Right ventricle myocardium inferior (tissue), 1 donor: ENCODE measurements at regions of chr3 and their contacts with region 1.

Region 1: DNA sequence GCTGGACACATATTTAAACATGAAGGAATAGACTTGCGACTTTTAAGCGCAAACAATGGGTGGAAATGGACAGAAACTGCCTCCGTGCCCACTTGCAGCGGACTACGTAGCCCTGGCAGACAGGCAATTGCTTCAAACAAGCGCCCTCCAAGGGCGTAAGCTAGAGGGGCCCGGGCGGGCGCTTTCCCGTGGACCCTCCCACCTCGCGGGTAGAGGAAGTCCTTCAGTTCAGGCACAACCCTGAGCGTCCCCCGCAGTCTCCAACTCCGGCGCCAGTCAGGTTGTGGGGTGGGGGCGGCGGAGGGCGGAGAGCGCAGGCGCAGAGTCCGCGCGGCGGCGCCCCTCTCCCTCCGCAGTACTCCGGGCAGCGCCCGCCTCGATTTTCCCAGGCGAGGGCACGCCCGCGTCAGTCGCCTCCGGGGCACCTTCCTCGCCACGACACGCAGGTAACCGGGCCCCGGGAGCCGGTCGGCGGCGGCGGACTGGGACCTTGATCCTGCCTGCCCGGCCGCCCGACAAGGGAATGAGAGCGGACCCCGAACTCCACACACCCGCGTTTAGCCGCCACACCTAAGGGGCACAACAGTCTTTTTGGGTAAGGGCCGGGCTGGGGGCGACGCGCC is at the start of gene SLC35G2:
- DNase-seq: peak; percentile 70
- ATAC-seq: peak; percentile 69
- total RNA-seq, gene SLC35G2: 2.1 TPM

Region 2: DNA sequence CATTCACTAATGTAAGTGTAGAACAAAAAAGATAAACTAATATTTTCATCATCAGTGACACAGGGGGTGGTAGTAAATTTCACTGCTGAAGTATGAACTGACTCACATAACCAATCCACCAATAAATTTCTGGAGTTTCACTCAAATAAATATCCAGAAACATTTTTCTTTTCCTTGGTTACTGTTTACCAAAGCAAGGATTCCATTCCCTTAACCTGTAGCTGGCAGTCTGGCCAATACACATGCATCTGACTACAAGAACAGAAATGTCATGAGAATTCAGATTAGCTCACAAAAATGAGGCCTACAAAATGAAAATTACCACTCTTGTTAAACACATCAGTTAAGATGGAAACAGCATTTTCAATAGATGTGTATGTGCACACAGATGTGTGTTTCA is 147.0 kb before region 1 on chr3:
- intact Hi-C with region 1: no loop called
- DNase-seq: no peak
- ATAC-seq: no peak

Region 3: DNA sequence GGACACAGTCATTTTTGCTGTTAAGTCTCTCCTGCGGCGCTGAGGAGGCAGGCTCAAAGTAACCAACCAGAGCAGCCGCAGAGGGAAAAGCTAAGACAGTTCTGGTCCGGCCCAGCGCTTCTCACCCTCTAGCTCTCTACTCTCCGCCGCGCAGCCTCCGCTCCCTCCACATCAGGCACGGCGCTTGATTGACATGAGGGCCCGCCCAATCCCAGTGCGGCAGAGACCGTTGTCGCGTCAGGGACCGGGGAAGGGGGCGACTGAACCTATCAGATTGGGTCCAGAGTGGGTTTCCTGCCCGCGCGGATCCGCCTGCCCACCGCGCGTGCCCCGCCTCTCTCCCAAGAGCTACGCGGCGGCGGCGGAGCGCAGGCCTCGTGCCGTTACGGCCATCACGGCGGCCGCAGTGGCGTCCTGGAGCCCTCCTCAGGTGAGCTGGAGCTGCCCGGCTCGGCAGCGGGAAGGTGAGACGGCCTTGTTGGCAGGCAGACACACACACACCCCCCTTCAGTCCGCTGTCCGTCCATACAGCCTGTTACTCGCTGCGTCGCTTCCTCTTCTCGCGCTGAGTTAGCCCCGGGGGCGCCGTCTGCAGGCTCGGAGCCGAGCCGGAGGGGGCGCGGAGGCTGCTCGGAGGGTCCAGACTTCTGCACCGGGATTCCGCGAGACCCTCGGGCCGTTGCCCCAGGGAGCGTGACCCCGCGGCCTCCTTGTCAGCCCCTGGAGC is 43.2 kb after region 1 on chr3 and contains the start of gene NCK1:
- intact Hi-C with region 1: loop called (anchors 5 kb)
- DNase-seq: peak; percentile 100
- ATAC-seq: peak; percentile 99
- total RNA-seq, gene NCK1: 25.0 TPM

Region 4: GRCh38 chr3:137013955-137014688 is 195.2 kb after region 1 on chr3:
- intact Hi-C with region 1: loop called (anchors 5 kb)
- DNase-seq: peak; percentile 93
- ATAC-seq: peak; percentile 95